ENCODE measurements at regions of chr9 and their contacts with region 1.

Region 1: GRCh38 chr9:130860458-130861316 is 25.6 kb downstream of the ABL1 start:
- DNase-seq: no peak
- H3K4me3 ChIP-seq: peak overlapping the region in 1 of 4 donors; percentile 39
- H3K27ac ChIP-seq: peak overlapping the region; percentile 56 to 86 (median 72)
- H3K4me1 ChIP-seq: peaks cover 3 to 68% (median 31%) of the 10 kb centered on the region in 3 donors
- H3K27me3 ChIP-seq: no peaks in the 10 kb centered on the region
- CTCF ChIP-seq: peak in 3 of 6 experiments; percentile 14 to 33 (median 25)
- POLR2A ChIP-seq: no peak

Region 2: DNA sequence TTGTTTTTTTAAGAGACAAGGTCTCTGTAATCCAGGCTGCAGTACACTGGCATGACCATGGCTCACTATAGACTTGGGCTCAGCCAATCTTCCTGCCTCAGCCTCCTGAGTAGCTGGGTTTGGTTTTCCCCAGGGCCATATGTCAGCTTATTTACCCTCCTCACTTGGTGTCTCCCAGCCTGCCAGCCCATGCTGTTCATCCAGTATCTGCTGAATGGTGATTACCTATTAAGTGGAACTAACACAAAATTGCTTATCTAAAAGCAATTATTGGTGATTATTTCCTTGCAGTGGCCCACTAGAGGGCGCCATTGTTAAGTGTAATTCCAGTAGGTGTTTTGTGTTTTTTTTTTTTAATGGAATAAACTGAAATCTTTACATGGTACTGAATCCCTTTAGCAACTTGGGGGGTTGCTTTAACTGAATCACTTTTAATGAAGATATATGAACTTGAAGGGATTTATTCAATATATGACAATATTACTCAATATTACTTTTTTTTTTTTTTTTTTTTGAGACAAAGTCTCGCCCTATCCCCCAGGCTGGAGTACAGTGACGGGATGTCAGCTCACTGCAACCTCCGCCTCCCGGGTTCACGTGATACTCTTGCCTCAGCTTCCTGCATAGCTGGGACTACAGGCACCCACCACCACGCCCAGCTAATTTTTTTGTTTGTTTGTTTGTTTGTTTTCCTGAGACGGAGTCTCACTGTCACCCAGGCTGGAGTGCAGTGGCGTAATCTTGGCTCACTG is 153.3 kb before region 1 on chr9:
- intact Hi-C with region 1: loop called (anchors 5 kb)
- DNase-seq: no peak
- H3K4me3 ChIP-seq: no peak overlapping the region
- H3K27ac ChIP-seq: no peak overlapping the region
- H3K4me1 ChIP-seq: peaks cover 0 to 10% (median 7%) of the 10 kb centered on the region in 3 donors
- H3K27me3 ChIP-seq: no peaks in the 10 kb centered on the region
- CTCF ChIP-seq: peak in 5 of 6 experiments; percentile 55 to 77 (median 67)
- POLR2A ChIP-seq: no peak

Region 3: GRCh38 chr9:130805510-130806326 is 55.0 kb before region 1 on chr9:
- intact Hi-C with region 1: no loop called
- DNase-seq: no peak
- H3K4me3 ChIP-seq: no peak overlapping the region
- H3K27ac ChIP-seq: peak overlapping the region in 2 of 4 donors; percentile 23 to 42
- H3K4me1 ChIP-seq: peaks cover 0 to 13% (median 2%) of the 10 kb centered on the region in 3 donors
- H3K27me3 ChIP-seq: no peaks in the 10 kb centered on the region
- CTCF ChIP-seq: no peak
- POLR2A ChIP-seq: no peak